ENCODE measurements at regions of chr3 and their contacts with region 1.

Region 1: DNA sequence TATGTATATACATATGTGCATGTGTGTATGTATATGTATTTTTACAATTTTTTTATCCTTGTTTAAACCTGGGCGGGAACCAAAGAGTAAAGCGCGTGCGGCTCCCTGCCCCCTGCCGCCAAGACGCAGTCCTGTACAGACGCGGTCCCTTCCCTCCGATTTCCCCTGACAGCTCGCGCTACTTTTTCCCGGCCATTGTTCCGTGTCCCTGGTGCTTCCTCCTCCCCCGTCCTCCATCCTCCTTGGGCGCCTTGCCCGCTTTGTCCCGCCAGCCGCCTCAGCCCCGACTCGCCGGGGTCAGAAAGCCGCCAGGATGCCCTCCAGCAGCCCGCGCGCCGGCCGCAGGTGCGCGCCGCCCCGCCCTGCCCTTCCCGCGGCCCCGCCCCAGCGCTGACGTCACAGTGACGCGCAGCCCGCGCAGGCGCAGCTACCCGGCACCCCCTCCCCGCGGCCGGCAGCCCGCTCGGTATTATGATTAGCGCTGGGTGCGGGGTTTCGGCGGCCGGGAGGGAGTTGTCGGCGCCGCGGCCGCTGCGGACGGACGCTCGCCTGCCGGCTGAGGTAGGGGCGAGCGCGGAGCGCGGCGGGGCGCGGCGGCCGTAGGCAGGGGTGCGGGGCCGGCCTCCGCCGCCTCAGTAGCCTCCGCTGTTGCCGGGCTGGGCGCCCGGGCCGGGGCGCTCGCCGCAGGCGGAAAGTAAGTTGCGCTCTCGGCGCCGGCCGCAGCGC is at the start of gene SNRK:
- DNase-seq: peak; percentile 93
- H3K4me3 Mint-ChIP-seq: peak within 1 kb of the TSS; percentile 94
- H3K27ac Mint-ChIP-seq: peak within 1 kb of the TSS; percentile 95
- H3K4me1 Mint-ChIP-seq: peaks cover 38% of the 10 kb centered on the region
- H3K27me3 Mint-ChIP-seq: no peaks in the 10 kb centered on the region
- total RNA-seq, gene SNRK: 23.9 to 24.4 TPM

Region 2: GRCh38 chr3:43105596-43106292 is 180.5 kb before region 1 on chr3 and contains the start of gene POMGNT2:
- CTCF ChIA-PET with region 1: no interaction called
- POLR2A ChIA-PET with region 1: no interaction called
- intact Hi-C with region 1: loop called (anchors 2 kb)
- DNase-seq: peak; percentile 93
- H3K4me3 Mint-ChIP-seq: peak within 1 kb of the TSS; percentile 73
- H3K27ac Mint-ChIP-seq: no peak within 1 kb of the TSS
- H3K4me1 Mint-ChIP-seq: peaks cover 11% of the 10 kb centered on the region
- H3K27me3 Mint-ChIP-seq: no peaks in the 10 kb centered on the region
- total RNA-seq, gene POMGNT2: 7.3 to 7.8 TPM

Region 3: GRCh38 chr3:43223670-43224364 is 62.5 kb before region 1 on chr3:
- CTCF ChIA-PET with region 1: no interaction called
- POLR2A ChIA-PET with region 1: no interaction called
- intact Hi-C with region 1: loop called (anchors 5 kb)
- DNase-seq: no peak
- H3K4me3 Mint-ChIP-seq: no peak overlapping the region
- H3K27ac Mint-ChIP-seq: no peak overlapping the region
- H3K4me1 Mint-ChIP-seq: peaks cover 45% of the 10 kb centered on the region
- H3K27me3 Mint-ChIP-seq: no peaks in the 10 kb centered on the region

Region 4: DNA sequence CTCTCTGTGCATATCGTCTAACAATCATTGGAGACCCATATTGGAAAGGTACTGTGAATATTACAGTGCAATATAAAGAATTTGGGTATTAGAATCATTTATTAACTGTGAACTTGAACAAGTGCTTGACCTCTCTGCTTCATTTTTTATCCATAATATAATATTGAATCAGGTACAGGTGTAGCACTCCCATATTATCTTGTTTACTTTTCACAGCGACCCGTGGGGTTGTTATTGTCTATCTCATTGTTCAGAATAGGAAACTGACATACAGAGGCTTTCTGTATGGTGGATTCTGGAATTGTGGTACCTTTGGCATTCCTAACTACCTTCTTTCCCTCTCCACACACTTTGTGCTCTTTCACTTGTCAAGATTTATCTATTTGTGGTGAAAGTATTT is 17.8 kb after region 1 on chr3:
- CTCF ChIA-PET with region 1: no interaction called
- POLR2A ChIA-PET with region 1: interaction called, 3 read pairs
- intact Hi-C with region 1: loop called (anchors 2 kb)
- DNase-seq: no peak
- H3K4me3 Mint-ChIP-seq: no peak overlapping the region
- H3K27ac Mint-ChIP-seq: no peak overlapping the region
- H3K4me1 Mint-ChIP-seq: peaks cover 65% of the 10 kb centered on the region
- H3K27me3 Mint-ChIP-seq: no peaks in the 10 kb centered on the region

Region 5: GRCh38 chr3:43503067-43503728 is 216.9 kb after region 1 on chr3:
- CTCF ChIA-PET with region 1: interaction called, 16 read pairs
- POLR2A ChIA-PET with region 1: no interaction called
- intact Hi-C with region 1: loop called (anchors 5 kb)
- DNase-seq: no peak
- H3K4me3 Mint-ChIP-seq: no peak overlapping the region
- H3K27ac Mint-ChIP-seq: no peak overlapping the region
- H3K4me1 Mint-ChIP-seq: peaks cover 56% of the 10 kb centered on the region
- H3K27me3 Mint-ChIP-seq: no peaks in the 10 kb centered on the region

Region 6: GRCh38 chr3:43580181-43580580 is 293.9 kb after region 1 on chr3:
- CTCF ChIA-PET with region 1: no interaction called
- POLR2A ChIA-PET with region 1: no interaction called
- intact Hi-C with region 1: no loop called
- DNase-seq: no peak
- H3K4me3 Mint-ChIP-seq: no peak overlapping the region
- H3K27ac Mint-ChIP-seq: no peak overlapping the region
- H3K4me1 Mint-ChIP-seq: peaks cover 10% of the 10 kb centered on the region
- H3K27me3 Mint-ChIP-seq: no peaks in the 10 kb centered on the region

Region 7: DNA sequence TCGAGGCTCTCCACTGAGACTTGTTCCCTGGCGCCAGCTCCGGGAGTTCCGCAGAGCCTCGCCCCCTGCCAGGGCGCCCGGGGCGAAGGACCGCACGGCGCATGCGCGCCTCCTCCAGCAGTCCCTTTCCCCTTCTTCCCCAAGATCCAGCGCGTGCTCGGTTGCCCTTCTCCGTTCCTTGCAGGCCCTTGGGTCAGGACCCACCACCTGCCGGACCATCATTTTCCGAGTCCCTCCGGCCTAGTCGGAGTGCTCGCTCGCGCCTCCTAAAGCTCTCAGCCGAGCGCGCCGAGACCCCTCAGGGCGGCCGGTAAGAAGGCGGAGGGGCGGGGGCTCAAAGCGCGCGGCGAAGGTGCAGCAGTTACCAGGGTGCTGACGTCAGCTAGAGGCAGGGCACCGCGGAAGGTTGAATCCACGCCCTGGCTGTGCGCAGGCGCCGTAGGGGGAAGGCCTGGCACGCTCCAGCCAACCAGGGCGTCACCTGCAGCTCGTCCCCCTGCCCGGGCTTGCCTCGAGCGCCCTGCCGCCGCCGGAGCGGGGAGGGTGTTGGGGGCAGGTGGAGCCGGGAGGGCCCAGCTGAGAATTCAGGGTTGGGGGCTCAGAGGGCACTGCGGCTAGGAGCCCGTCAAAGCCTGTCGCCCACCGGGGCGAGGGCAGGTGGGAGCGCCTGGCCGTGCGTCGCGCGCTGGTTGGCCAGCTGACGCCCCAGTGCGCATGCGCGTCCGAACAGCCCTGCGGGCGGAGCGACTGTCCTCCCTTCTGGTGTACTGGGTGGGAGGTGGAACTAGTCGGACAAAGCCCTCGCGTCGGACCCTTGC is 1051.9 kb after region 1 on chr3 and contains the start of gene TCAIM:
- CTCF ChIA-PET with region 1: no interaction called
- POLR2A ChIA-PET with region 1: no interaction called
- intact Hi-C with region 1: loop called (anchors 5 kb)
- DNase-seq: peak; percentile 99
- H3K4me3 Mint-ChIP-seq: peak within 1 kb of the TSS; percentile 98
- H3K27ac Mint-ChIP-seq: peak within 1 kb of the TSS; percentile 97
- H3K4me1 Mint-ChIP-seq: peaks cover 22% of the 10 kb centered on the region
- H3K27me3 Mint-ChIP-seq: peaks cover 6% of the 10 kb centered on the region
- total RNA-seq, gene TCAIM: 17.2 to 17.9 TPM